BJ (cell line): ENCODE measurements at regions of chr6 and their contacts with region 1.

Region 1: GRCh38 chr6:32092760-32093497 is 16.2 kb downstream of the TNXB start:
- DNase-seq: peak; percentile 69
- H3K4me3 ChIP-seq: no peak overlapping the region
- H3K27me3 ChIP-seq: peaks cover 44% of the 10 kb centered on the region
- CTCF ChIP-seq: no peak

Region 2: GRCh38 chr6:32108094-32108627 is 15.2 kb after region 1 on chr6:
- CTCF ChIA-PET with region 1: interaction called, 16 read pairs
- POLR2A ChIA-PET with region 1: no interaction called
- DNase-seq: no peak
- H3K4me3 ChIP-seq: 0 out of 2 replicates have a peak overlapping the region, but pooled peaks have one; percentile 3
- H3K27me3 ChIP-seq: peaks cover 4% of the 10 kb centered on the region
- CTCF ChIP-seq: no peak

Region 3: DNA sequence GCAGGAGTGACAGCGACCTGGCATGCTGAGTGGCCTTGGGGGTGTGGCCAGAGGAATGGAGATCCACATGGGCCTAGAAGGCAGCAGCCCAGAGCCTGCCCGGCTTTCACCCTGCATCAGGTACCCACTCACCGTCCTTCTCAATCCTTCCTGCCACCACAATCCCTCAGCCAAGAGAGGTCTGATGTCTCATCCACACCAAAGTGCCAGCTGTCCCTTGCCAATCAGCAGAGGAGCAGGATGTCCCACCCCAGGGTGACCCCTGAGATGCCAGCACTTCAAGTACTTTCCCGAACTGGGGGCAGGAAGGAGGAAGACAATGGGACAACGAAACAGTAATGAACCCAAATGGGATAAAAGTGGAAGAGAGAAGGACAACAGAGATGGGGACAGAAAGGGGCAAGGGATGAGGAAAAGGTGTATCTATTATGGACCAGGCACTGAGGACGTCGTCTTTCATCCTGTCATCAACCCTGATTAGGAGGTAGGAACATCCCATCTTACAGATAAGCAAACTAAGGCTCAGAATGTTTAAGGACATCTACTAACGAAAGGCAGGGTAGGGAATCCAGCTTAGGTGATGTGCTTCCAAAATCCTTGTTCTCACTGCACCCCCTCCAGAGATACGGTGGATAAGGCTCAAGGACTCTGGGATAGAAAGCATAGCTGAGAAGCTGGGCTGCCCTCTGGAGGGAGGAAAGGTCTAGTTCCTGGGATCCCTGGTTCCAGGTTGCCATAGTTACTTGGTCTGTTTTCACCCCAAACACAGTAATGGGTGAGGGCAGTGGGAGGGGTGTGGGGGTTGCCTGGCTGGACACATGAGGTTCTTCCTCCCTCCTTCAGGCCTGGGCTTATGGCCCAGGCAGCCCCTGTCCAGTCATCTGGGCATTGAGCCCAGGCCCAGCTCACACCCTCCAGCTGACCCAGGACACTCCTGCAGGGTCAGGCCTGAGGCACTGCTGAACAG is 20.7 kb after region 1 on chr6:
- CTCF ChIA-PET with region 1: interaction called, 18 read pairs
- POLR2A ChIA-PET with region 1: no interaction called
- DNase-seq: peak; percentile 97
- H3K4me3 ChIP-seq: no peak overlapping the region
- H3K27me3 ChIP-seq: peaks cover 4% of the 10 kb centered on the region
- CTCF ChIP-seq: peak; percentile 71